ENCODE measurements at regions of chr10 and their contacts with region 1.

Region 1: DNA sequence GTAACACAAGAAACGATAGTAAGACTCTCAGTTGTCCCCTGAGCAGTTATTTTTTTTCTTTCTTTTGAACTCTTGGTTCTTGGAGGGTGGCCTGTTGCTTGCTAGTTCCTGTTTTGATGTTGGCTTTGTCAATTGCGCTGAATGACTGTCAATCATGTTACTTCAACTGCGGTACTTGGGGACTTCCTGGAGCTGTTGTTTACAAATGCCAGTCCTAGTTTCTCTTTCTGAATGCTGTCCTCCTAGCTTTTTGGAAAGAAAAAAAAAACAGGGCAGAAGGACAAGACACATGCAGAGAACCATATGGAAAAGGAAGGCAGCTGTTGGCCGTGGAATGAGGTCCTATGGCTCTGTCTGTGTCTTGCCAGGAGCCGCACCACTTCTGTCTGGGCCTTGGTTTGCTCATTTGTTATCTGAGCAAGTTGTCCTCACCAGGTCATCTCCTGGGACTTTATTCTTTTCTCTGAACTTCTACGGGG is 7.0 kb upstream of the PDCD4 start:
- DNase-seq: peak in 7 of 9 experiments; percentile 45 to 96 (median 62)
- ATAC-seq: peak; percentile 63
- H3K4me3 ChIP-seq: peak overlapping the region; percentile 5 to 18
- H3K4me3 Mint-ChIP-seq: peak overlapping the region; percentile 78
- H3K27ac ChIP-seq: peak overlapping the region; percentile 77 to 97
- H3K27ac Mint-ChIP-seq: peak overlapping the region; percentile 98
- H3K4me1 ChIP-seq: peaks cover 99% of the 10 kb centered on the region
- H3K4me1 Mint-ChIP-seq: peaks cover 98% of the 10 kb centered on the region
- H3K27me3 ChIP-seq: no peaks in the 10 kb centered on the region
- H3K27me3 Mint-ChIP-seq: no peaks in the 10 kb centered on the region
- CTCF ChIP-seq: no peak

Region 2: GRCh38 chr10:110210674-110211464 is 653.8 kb before region 1 on chr10:
- CTCF ChIA-PET with region 1: no interaction called
- POLR2A ChIA-PET with region 1: no interaction called
- intact Hi-C with region 1: loop called in 1 of 2 experiments (anchors 10 kb)
- DNase-seq: peak; percentile 77 to 94 (median 90)
- ATAC-seq: peak; percentile 48
- H3K4me3 ChIP-seq: peak overlapping the region; percentile 59 to 91
- H3K4me3 Mint-ChIP-seq: peak overlapping the region; percentile 94
- H3K27ac ChIP-seq: peak overlapping the region; percentile 60 to 90
- H3K27ac Mint-ChIP-seq: peak overlapping the region; percentile 99
- H3K4me1 ChIP-seq: peaks cover 22% of the 10 kb centered on the region
- H3K4me1 Mint-ChIP-seq: peaks cover 47% of the 10 kb centered on the region
- H3K27me3 ChIP-seq: peaks cover 0 to 13% of the 10 kb centered on the region in 2 experiments
- H3K27me3 Mint-ChIP-seq: peaks cover 17% of the 10 kb centered on the region
- CTCF ChIP-seq: no peak

Region 3: GRCh38 chr10:110843031-110843430 is 21.7 kb before region 1 on chr10:
- CTCF ChIA-PET with region 1: interaction called, 4 read pairs
- POLR2A ChIA-PET with region 1: interaction called, 13 read pairs
- intact Hi-C with region 1: loop called in 1 of 2 experiments (anchors 2 kb)
- DNase-seq: peak in 5 of 9 experiments; percentile 37 to 88 (median 63)
- ATAC-seq: peak; percentile 93
- H3K4me3 ChIP-seq: no peak overlapping the region
- H3K4me3 Mint-ChIP-seq: peak overlapping the region; percentile 9
- H3K27ac ChIP-seq: no peak overlapping the region
- H3K27ac Mint-ChIP-seq: peak overlapping the region; percentile 58
- H3K4me1 ChIP-seq: peaks cover 26% of the 10 kb centered on the region
- H3K4me1 Mint-ChIP-seq: peaks cover 62% of the 10 kb centered on the region
- H3K27me3 ChIP-seq: no peaks in the 10 kb centered on the region
- H3K27me3 Mint-ChIP-seq: no peaks in the 10 kb centered on the region
- CTCF ChIP-seq: no peak

Region 4: DNA sequence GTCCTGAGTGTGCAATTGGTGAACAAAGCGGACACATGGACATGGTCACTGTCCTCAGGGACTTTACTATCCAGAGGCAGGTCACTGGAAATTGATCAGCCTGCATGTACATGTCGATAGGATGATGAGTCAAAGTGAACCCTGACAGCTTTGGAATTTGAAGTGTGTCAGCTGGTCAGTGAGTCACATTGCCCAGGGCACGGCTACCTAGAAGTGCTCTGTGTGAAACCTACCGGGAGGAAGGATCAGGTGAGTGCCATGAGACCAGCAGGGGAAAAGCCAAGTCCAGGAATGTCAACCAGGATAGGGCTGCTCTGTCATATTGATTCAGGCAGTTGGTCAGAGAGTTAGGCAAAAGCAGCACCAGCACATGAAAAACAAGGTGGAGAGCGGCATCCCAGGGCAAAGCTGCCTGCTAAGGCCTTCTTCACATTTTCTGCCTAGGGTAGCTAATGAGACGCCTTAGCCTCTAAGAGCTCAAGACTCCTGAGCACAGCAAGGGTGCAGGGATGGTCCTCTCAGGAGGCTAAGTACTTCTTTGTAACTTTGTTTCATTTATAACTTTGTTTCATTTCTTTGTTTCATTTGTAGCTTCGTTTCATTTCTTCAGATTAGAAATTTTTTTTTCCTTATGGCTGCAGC is 12.3 kb before region 1 on chr10:
- CTCF ChIA-PET with region 1: interaction called, 15 read pairs
- POLR2A ChIA-PET with region 1: interaction called, 19 read pairs
- intact Hi-C with region 1: loop called in 1 of 2 experiments (anchors 1 kb)
- DNase-seq: peak in 2 of 9 experiments; percentile 10 to 47
- ATAC-seq: no peak
- H3K4me3 ChIP-seq: no peak overlapping the region
- H3K4me3 Mint-ChIP-seq: peak overlapping the region; percentile 38
- H3K27ac ChIP-seq: no peak overlapping the region
- H3K27ac Mint-ChIP-seq: peak overlapping the region; percentile 65
- H3K4me1 ChIP-seq: peaks cover 56% of the 10 kb centered on the region
- H3K4me1 Mint-ChIP-seq: peaks cover 80% of the 10 kb centered on the region
- H3K27me3 ChIP-seq: no peaks in the 10 kb centered on the region
- H3K27me3 Mint-ChIP-seq: no peaks in the 10 kb centered on the region
- CTCF ChIP-seq: no peak

Measured in CD8-positive, alpha-beta T cell (primary cell).